Activated CD4-positive, alpha-beta T cell treated with anti-CD3 and anti-CD28 coated beads for 36 hours (primary cell): ENCODE measurements at regions of chr16 and their contacts with region 1.

Region 1: GRCh38 chr16:67892899-67893742 is at the start of gene PSKH1:
- DNase-seq: peak; percentile 97
- ATAC-seq: peak; percentile 99
- H3K4me3 Mint-ChIP-seq: peak within 1 kb of the TSS; percentile 92
- H3K27ac Mint-ChIP-seq: peak within 1 kb of the TSS; percentile 92
- H3K4me1 Mint-ChIP-seq: peaks cover 30% of the 10 kb centered on the region
- H3K27me3 Mint-ChIP-seq: no peaks in the 10 kb centered on the region
- total RNA-seq, gene PSKH1: 11.7 to 11.9 TPM

Region 2: DNA sequence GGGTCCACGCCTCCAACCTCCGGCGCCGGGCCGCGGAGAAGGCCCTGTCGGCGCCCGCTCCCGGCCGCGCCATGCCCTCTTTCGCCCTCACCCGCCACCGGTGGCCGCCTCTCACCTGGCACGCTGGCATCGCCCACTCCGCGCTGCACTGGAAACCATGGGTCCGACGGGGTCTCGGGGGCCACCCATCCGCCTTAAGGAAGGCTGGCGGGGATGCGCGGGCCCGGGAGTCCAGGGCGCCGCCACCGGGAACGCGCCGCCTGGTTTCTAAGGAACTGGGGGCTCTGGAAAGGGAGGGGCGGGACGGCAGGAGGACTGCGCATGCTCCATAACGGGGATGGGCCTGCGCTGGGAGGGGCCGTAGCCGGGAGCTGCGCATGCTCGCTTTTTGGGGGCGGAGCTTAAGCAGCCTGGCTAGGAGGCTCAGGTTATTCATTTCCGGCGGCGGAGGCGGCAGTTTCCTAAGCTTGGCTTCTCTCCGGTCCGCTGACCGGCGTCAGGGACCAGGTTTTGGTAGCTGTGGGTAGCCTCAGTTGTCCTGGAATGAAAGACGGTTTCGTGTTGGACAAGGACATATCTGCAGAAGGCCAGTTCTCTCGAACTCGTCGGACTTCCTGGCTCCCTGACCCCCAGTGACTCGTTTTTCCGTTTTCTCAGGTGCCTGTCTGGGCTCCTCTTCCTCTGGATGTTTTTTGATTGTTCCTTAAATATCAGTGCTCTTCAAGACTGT is 173.9 kb before region 1 on chr16 and contains the start of gene GFOD2:
- CTCF ChIA-PET with region 1: no interaction called
- POLR2A ChIA-PET with region 1: no interaction called
- intact Hi-C with region 1: loop called in 1 of 2 experiments (anchors 1 kb)
- DNase-seq: peak; percentile 99
- ATAC-seq: peak; percentile 95
- H3K4me3 Mint-ChIP-seq: peak within 1 kb of the TSS; percentile 82
- H3K27ac Mint-ChIP-seq: peak within 1 kb of the TSS; percentile 98
- H3K4me1 Mint-ChIP-seq: peaks cover 29% of the 10 kb centered on the region
- H3K27me3 Mint-ChIP-seq: no peaks in the 10 kb centered on the region
- total RNA-seq, gene GFOD2: 8.7 to 11.5 TPM

Region 3: DNA sequence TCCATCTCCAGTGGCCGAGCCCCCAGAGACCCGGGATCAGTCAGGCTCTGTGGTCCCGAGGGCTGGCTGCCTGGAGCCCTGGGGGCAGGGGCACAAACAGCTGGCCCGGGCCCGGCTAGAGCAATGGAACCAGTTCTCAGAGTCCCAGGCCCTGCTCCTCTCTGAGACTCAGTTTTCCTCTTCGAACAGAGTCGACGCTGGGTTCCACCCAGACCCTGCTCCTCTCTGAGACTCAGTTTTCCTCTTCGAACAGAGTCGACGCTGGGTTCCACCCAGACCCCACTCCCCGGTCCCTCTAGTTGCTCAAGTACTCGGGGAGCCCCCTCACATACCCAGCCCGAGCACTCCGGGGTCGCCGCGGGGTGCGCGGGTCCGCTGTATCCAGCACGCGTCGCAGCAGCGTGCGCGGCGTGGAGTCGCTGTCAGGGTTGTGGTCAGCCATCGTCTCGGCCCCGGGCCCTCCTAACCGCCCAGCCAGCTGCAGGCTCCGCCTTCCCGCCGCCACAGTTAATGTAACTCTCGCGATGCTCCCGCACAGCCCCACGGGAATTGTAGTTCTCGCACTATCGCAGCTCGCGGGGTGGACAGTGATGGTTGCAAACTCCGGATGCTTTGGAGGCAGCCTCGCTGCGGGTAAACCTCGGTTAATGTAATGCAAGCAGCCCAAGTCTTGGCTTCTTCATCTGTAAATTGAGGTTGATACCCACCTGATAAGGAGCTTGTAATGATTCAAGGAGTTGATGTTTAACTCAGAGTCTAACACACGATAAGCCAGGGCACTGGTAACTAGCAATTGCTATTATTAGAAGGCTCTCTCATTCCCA is 59.5 kb before region 1 on chr16:
- CTCF ChIA-PET with region 1: no interaction called
- POLR2A ChIA-PET with region 1: no interaction called
- intact Hi-C with region 1: loop called in 1 of 2 experiments (anchors 1 kb)
- DNase-seq: peak; percentile 97
- ATAC-seq: peak; percentile 100
- H3K4me3 Mint-ChIP-seq: peak overlapping the region; percentile 87
- H3K27ac Mint-ChIP-seq: peak overlapping the region; percentile 78
- H3K4me1 Mint-ChIP-seq: peaks cover 9% of the 10 kb centered on the region
- H3K27me3 Mint-ChIP-seq: no peaks in the 10 kb centered on the region

Region 4: GRCh38 chr16:67872786-67873537 is 20.2 kb before region 1 on chr16 and contains the start of gene EDC4:
- CTCF ChIA-PET with region 1: interaction called, 4 read pairs
- POLR2A ChIA-PET with region 1: no interaction called
- intact Hi-C with region 1: loop called in 1 of 2 experiments (anchors 1 kb)
- DNase-seq: peak; percentile 92
- ATAC-seq: peak; percentile 89
- H3K4me3 Mint-ChIP-seq: peak within 1 kb of the TSS; percentile 77
- H3K27ac Mint-ChIP-seq: peak within 1 kb of the TSS; percentile 92
- H3K4me1 Mint-ChIP-seq: peaks cover 30% of the 10 kb centered on the region
- H3K27me3 Mint-ChIP-seq: no peaks in the 10 kb centered on the region
- total RNA-seq, gene EDC4: 92.8 to 96.9 TPM

Region 5: GRCh38 chr16:67917852-67918236 is 24.7 kb after region 1 on chr16:
- CTCF ChIA-PET with region 1: interaction called, 3 read pairs
- POLR2A ChIA-PET with region 1: interaction called, 10 read pairs
- intact Hi-C with region 1: loop called in 1 of 2 experiments (anchors 1 kb)
- DNase-seq: peak; percentile 79
- ATAC-seq: peak; percentile 100
- H3K4me3 Mint-ChIP-seq: no peak overlapping the region
- H3K27ac Mint-ChIP-seq: peak overlapping the region; percentile 91
- H3K4me1 Mint-ChIP-seq: peaks cover 34% of the 10 kb centered on the region
- H3K27me3 Mint-ChIP-seq: no peaks in the 10 kb centered on the region

Region 6: DNA sequence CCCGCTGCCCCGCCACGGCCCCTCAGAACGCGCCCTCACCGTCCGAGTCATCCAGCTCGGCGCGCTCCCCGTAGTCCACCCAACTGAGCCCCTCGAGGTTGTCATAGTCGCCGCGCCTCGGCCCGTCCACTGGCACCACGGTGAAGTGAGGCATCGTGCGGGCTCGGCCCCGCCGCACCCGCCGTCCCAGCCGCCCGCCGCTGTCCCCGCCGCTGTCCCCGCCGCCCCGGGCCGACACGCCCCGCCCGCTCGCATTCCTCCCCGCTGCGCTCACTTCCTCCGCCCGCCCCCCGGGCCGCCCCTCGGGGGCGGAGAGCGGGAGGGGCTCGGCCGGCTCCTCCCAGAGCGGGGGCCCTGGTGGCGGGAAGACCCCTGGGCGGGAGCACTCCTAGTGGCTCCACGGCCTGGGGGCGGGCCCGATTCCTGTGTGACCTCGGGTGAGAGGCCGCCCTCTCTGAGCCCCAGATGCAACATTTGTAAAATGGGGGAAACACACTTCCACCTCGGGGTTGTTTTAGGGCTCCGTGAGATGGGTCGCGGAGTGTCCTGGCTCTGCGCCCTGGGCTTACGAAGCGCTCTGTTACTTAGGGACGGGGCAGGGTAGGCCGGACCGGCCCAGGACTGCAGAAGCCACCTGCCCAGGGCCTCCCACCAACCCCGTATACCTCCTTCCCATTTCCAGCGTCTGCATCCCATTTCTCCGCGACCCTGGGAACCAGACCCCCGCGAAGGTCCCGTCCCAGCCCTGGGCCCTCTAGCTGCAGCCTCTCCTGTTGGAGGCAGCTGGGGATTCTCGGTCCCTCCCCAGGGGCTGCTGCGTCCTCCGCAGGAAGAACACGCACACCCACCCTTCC is 75.5 kb after region 1 on chr16 and contains the start of gene SLC12A4:
- CTCF ChIA-PET with region 1: interaction called, 3 read pairs
- POLR2A ChIA-PET with region 1: no interaction called
- intact Hi-C with region 1: loop called (anchors 1 kb)
- DNase-seq: peak; percentile 94
- ATAC-seq: peak; percentile 90
- H3K4me3 Mint-ChIP-seq: peak within 1 kb of the TSS; percentile 84
- H3K27ac Mint-ChIP-seq: peak within 1 kb of the TSS; percentile 80
- H3K4me1 Mint-ChIP-seq: peaks cover 14% of the 10 kb centered on the region
- H3K27me3 Mint-ChIP-seq: no peaks in the 10 kb centered on the region
- total RNA-seq, gene SLC12A4: 21.8 to 25.8 TPM

Region 7: DNA sequence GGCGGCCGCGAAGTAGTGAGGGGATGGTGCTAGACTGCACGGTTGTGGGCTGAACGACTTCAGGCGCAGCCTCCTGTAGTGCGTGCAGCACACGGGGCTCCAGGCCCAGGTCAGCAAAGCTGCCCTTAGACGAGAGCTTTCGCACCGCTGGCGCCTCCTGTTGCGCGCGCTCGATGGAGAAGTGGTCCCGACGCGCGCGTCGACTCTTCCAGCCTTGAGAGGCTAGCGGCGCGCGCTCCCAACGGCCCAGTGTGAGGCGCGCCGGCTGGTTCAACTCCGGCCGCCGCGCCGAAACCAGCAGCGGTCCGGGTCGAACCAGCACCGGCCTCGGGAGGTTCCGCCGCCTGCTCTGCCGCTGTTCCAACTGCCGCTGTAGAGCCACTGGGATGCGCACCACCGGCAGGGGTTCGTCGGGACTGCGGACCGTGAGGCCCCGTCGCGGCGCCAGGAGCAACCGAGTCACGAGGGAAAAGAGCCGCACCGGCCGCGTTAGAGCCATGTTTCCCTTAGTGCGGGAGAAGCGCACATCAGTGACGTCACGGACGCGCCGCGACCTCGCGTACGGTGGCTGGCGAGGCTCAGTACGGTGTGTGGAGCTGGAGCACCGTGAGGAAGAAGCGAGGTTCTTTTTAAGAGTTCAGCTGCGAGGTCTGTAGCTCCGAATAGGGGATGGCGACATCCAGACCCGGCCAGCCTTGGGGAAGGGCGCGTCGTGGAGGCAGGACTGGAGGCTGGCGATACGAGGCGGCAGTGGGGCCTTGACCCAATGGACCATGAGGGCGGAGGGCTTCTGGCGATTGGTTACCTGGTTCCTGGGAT is 129.8 kb after region 1 on chr16 and contains the starts of genes DDX28 and DUS2:
- CTCF ChIA-PET with region 1: no interaction called
- POLR2A ChIA-PET with region 1: no interaction called
- intact Hi-C with region 1: loop called in 1 of 2 experiments (anchors 1 kb)
- DNase-seq: peak; percentile 95
- ATAC-seq: peak; percentile 89
- H3K4me3 Mint-ChIP-seq: peak within 1 kb of the TSS; percentile 95
- H3K27ac Mint-ChIP-seq: peak within 1 kb of the TSS; percentile 97
- H3K4me1 Mint-ChIP-seq: peaks cover 23% of the 10 kb centered on the region
- H3K27me3 Mint-ChIP-seq: no peaks in the 10 kb centered on the region
- total RNA-seq, gene DDX28: 13.7 to 17.1 TPM
- total RNA-seq, gene DUS2: 29.5 to 33.1 TPM